Caco-2 (cell line): ENCODE measurements at regions of chr9 and their contacts with region 1.

Region 1: GRCh38 chr9:1460143-1460769 is 410.1 kb downstream of the DMRT2 start:
- DNase-seq: peak in 1 of 2 experiments; percentile 29
- H3K4me3 ChIP-seq: no peak overlapping the region
- H3K4me3 Mint-ChIP-seq: no peak overlapping the region
- H3K27ac Mint-ChIP-seq: no peak overlapping the region
- H3K4me1 ChIP-seq: no peaks in the 10 kb centered on the region
- H3K4me1 Mint-ChIP-seq: no peaks in the 10 kb centered on the region
- H3K27me3 ChIP-seq: no peaks in the 10 kb centered on the region
- H3K27me3 Mint-ChIP-seq: peaks cover 5% of the 10 kb centered on the region
- CTCF ChIP-seq: peak; percentile 56 to 57

Region 2: GRCh38 chr9:1184146-1184545 is 276.1 kb before region 1 on chr9:
- CTCF ChIA-PET with region 1: no interaction called
- POLR2A ChIA-PET with region 1: no interaction called
- intact Hi-C with region 1: no loop called
- DNase-seq: no peak
- H3K4me3 ChIP-seq: no peak overlapping the region
- H3K4me3 Mint-ChIP-seq: no peak overlapping the region
- H3K27ac Mint-ChIP-seq: no peak overlapping the region
- H3K4me1 ChIP-seq: no peaks in the 10 kb centered on the region
- H3K4me1 Mint-ChIP-seq: no peaks in the 10 kb centered on the region
- H3K27me3 ChIP-seq: no peaks in the 10 kb centered on the region
- H3K27me3 Mint-ChIP-seq: peaks cover 11% of the 10 kb centered on the region
- CTCF ChIP-seq: no peak

Region 3: DNA sequence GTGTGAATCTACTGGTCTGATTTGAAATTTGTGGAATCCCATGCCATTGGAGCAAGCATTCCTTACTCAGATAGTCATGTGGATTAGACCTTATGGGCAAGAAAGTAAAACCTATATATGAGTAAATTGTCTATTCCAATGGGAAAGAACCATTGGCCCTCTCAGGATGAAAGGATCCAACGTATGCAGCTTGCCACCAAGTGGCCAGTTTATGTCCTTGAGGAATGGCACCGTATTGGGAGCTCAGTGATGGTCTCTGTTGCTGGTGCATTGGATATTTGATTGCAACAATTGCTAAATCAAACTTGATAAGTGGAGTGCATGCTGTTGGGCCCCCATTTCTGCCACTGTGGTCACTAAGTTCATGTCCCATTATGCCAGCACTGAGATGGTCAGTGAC is 67.7 kb after region 1 on chr9:
- CTCF ChIA-PET with region 1: no interaction called
- POLR2A ChIA-PET with region 1: no interaction called
- intact Hi-C with region 1: loop called (anchors 1 kb)
- DNase-seq: no peak
- H3K4me3 ChIP-seq: no peak overlapping the region
- H3K4me3 Mint-ChIP-seq: no peak overlapping the region
- H3K27ac Mint-ChIP-seq: no peak overlapping the region
- H3K4me1 ChIP-seq: no peaks in the 10 kb centered on the region
- H3K4me1 Mint-ChIP-seq: no peaks in the 10 kb centered on the region
- H3K27me3 ChIP-seq: no peaks in the 10 kb centered on the region
- H3K27me3 Mint-ChIP-seq: no peaks in the 10 kb centered on the region
- CTCF ChIP-seq: no peak

Region 4: GRCh38 chr9:1604942-1605560 is 144.8 kb after region 1 on chr9:
- CTCF ChIA-PET with region 1: no interaction called
- POLR2A ChIA-PET with region 1: no interaction called
- intact Hi-C with region 1: loop called (anchors 1 kb)
- DNase-seq: peak; percentile 13 to 27
- H3K4me3 ChIP-seq: no peak overlapping the region
- H3K4me3 Mint-ChIP-seq: no peak overlapping the region
- H3K27ac Mint-ChIP-seq: no peak overlapping the region
- H3K4me1 ChIP-seq: no peaks in the 10 kb centered on the region
- H3K4me1 Mint-ChIP-seq: no peaks in the 10 kb centered on the region
- H3K27me3 ChIP-seq: no peaks in the 10 kb centered on the region
- H3K27me3 Mint-ChIP-seq: no peaks in the 10 kb centered on the region
- CTCF ChIP-seq: peak; percentile 37 to 51

Region 5: DNA sequence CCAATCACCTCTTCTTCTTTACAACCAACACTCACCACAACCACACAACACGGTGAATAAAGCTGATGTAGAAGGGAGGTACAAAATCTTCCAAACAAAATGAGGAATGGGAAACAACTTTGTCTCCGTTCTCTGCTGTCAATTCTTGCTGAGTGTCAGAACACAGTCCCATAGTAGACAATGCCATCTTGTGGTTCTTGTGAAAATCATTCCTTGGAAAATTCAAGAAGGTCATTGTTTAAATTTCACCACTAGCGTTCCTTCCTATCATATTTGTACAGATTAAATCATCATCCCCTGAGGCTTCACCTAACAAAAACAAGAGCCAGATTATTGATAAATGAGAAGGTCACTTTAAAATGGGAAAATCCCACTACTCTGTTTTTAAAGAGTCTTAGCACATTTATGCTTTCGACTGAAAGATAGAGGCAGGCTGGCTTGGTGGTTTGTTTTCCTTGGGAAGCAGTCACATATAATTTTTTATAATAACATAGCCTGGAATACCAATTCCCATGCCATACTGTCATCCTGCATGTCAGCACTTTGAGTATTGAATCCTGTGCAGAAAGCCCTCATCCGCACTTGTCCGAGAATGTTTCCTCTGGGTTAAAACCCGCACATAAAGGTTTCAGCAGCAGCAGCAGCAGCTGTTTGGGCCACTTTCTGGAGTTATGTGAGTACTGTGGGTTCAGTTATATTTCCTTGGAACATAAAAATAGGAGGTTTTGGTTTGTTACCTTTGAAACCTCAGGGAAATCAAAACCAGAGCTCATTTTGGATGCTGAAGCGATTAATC is 159.9 kb after region 1 on chr9:
- CTCF ChIA-PET with region 1: no interaction called
- POLR2A ChIA-PET with region 1: no interaction called
- intact Hi-C with region 1: loop called (anchors 1 kb)
- DNase-seq: peak in 1 of 2 experiments; percentile 1
- H3K4me3 ChIP-seq: no peak overlapping the region
- H3K4me3 Mint-ChIP-seq: no peak overlapping the region
- H3K27ac Mint-ChIP-seq: no peak overlapping the region
- H3K4me1 ChIP-seq: no peaks in the 10 kb centered on the region
- H3K4me1 Mint-ChIP-seq: peaks cover 5% of the 10 kb centered on the region
- H3K27me3 ChIP-seq: no peaks in the 10 kb centered on the region
- H3K27me3 Mint-ChIP-seq: peaks cover 19% of the 10 kb centered on the region
- CTCF ChIP-seq: peak; percentile 12 to 30